CD4-positive, alpha-beta memory T cell (primary cell): ENCODE measurements at regions of chr16 and their contacts with region 1.

Region 1: GRCh38 chr16:81095953-81096717 is at the start of gene GCSH:
- DNase-seq: peak; percentile 97 to 99 (median 99)
- H3K4me3 ChIP-seq: peak within 1 kb of the TSS; percentile 69 to 73
- H3K4me3 Mint-ChIP-seq: peak within 1 kb of the TSS; percentile 67 to 90 (median 85)
- H3K27ac ChIP-seq: peak within 1 kb of the TSS; percentile 37
- H3K27ac Mint-ChIP-seq: peak within 1 kb of the TSS; percentile 18 to 83 (median 48)
- H3K4me1 ChIP-seq: peaks cover 11% of the 10 kb centered on the region
- H3K4me1 Mint-ChIP-seq: peaks cover 4 to 17% (median 5%) of the 10 kb centered on the region in 4 donors
- H3K27me3 ChIP-seq: no peaks in the 10 kb centered on the region
- H3K27me3 Mint-ChIP-seq: no peaks in the 10 kb centered on the region
- total RNA-seq, gene GCSH: 3.5 to 4.9 TPM

Region 2: GRCh38 chr16:81314603-81315270 is 218.6 kb after region 1 on chr16 and contains the start of gene GAN:
- CTCF ChIA-PET with region 1: no interaction called
- POLR2A ChIA-PET with region 1: no interaction called
- intact Hi-C with region 1: loop called (anchors 1 kb)
- DNase-seq: peak; percentile 93 to 95 (median 94)
- H3K4me3 ChIP-seq: peak within 1 kb of the TSS; percentile 86 to 93
- H3K4me3 Mint-ChIP-seq: peak within 1 kb of the TSS; percentile 92 to 99 (median 97)
- H3K27ac ChIP-seq: peak within 1 kb of the TSS; percentile 33
- H3K27ac Mint-ChIP-seq: peak within 1 kb of the TSS; percentile 89 to 98 (median 94)
- H3K4me1 ChIP-seq: peaks cover 25% of the 10 kb centered on the region
- H3K4me1 Mint-ChIP-seq: peaks cover 33 to 53% (median 44%) of the 10 kb centered on the region in 4 donors
- H3K27me3 ChIP-seq: no peaks in the 10 kb centered on the region
- H3K27me3 Mint-ChIP-seq: no peaks in the 10 kb centered on the region
- total RNA-seq, gene GAN: 9.5 to 10.8 TPM